GM12878 (cell line): ENCODE measurements at regions of chr14 and their contacts with region 1.

Region 1: DNA sequence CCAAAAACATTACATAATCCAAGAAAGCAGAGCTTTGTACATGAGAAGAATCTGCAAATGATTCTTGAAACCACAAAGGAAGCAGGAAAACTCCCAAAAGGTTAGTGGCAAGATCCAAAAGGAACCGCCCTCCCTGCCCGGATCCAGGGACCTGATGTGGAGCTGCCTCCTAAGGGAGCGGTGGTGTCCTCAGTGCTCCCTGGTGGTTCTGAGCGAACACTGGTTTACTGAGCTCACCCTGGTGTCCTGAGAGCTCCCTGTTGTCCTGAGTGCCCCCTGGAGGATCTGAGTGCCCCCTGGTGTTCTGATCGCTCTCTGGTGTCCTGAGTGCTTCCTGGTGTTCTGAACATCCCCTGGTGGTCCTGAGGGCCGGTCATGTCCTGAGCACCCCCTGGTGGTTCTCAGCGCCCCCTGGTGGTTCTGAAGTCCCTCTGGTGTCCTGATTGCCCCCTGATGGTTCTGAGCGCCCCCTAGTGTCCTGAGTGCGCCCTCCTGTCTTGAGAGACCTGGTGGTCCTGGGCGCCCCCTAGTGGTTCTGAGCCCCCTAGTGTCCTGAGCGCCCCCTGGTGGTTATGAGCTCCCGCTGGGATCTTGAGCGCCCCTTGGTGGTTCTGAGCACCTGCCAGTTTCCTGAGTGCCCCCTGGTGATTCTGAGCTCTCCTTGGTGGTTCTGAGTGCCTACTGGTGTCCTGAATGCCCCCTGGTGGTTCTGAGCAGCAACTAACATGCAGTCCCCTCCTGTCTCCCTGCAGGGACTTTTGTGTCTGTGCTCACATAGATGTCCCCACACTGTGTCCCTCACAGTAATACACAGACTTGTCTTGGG is 891.1 kb downstream of the TMEM121 start:
- DNase-seq: peak; percentile 72
- ATAC-seq: peak; percentile 99
- H3K4me3 ChIP-seq: no peak overlapping the region
- H3K27ac ChIP-seq: no peak overlapping the region
- H3K4me1 ChIP-seq: no peaks in the 10 kb centered on the region
- H3K27me3 ChIP-seq: no peaks in the 10 kb centered on the region; a peak in 1 of 4 replicates
- CTCF ChIP-seq: peak; percentile 99 to 100 (median 100)
- EP300 ChIP-seq: no peak
- POLR2A ChIP-seq: no peak
- RAD21 ChIP-seq: peak; percentile 49; the same call in 1 of the 2 replicates

Region 2: DNA sequence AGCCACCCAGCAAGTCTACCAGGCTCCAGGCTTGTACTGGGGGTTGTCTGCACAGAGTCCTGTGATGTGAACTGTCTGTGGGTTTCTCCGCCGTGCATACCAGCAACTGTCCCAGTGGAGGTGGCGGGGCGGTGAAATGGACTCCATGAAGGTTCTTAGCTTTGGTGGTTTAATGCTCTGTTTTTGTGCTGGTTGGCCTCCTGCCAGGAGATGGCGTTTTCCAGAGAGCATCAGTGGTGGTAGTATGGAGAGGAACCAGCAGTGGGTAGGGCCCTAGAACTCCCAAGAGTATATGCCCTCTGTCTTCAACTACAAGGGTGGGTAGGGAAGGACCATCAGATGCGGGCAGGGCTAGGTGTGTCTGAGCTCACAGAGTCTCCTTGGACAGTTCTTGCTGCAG is 587.3 kb before region 1 on chr14:
- CTCF ChIA-PET with region 1: interaction called, 11 read pairs
- POLR2A ChIA-PET with region 1: no interaction called
- RAD21 ChIA-PET with region 1: no interaction called
- SMC1A ChIA-PET with region 1: no interaction called
- in situ Hi-C with region 1: no loop called
- intact Hi-C with region 1: no loop called
- DNase-seq: no peak
- ATAC-seq: no peak
- H3K4me3 ChIP-seq: no peak overlapping the region
- H3K27ac ChIP-seq: no peak overlapping the region
- H3K4me1 ChIP-seq: no peaks in the 10 kb centered on the region
- H3K27me3 ChIP-seq: no peaks in the 10 kb centered on the region
- CTCF ChIP-seq: no peak
- EP300 ChIP-seq: no peak
- POLR2A ChIP-seq: no peak
- RAD21 ChIP-seq: no peak

Region 3: GRCh38 chr14:106318700-106319099 is 98.7 kb before region 1 on chr14:
- CTCF ChIA-PET with region 1: interaction called, 63 read pairs
- POLR2A ChIA-PET with region 1: no interaction called
- RAD21 ChIA-PET with region 1: no interaction called
- SMC1A ChIA-PET with region 1: interaction called, 3 read pairs
- in situ Hi-C with region 1: no loop called
- intact Hi-C with region 1: loop called (anchors 5 kb)
- DNase-seq: no peak
- ATAC-seq: peak; percentile 79
- H3K4me3 ChIP-seq: no peak overlapping the region
- H3K27ac ChIP-seq: no peak overlapping the region
- H3K4me1 ChIP-seq: no peaks in the 10 kb centered on the region; the same call in 1 of the 2 replicates
- H3K27me3 ChIP-seq: no peaks in the 10 kb centered on the region
- CTCF ChIP-seq: peak; percentile 59 to 89 (median 87)
- EP300 ChIP-seq: no peak
- POLR2A ChIP-seq: no peak
- RAD21 ChIP-seq: 0 out of 2 replicates have a peak, but pooled peaks have one; percentile 13

Region 4: GRCh38 chr14:106436310-106436905 is 19.0 kb after region 1 on chr14:
- CTCF ChIA-PET with region 1: interaction called, 104 read pairs
- POLR2A ChIA-PET with region 1: no interaction called
- RAD21 ChIA-PET with region 1: interaction called, 7 read pairs
- SMC1A ChIA-PET with region 1: interaction called, 6 read pairs
- in situ Hi-C with region 1: no loop called
- intact Hi-C with region 1: no loop called
- DNase-seq: no peak
- ATAC-seq: peak; percentile 68
- H3K4me3 ChIP-seq: no peak overlapping the region
- H3K27ac ChIP-seq: no peak overlapping the region
- H3K4me1 ChIP-seq: no peaks in the 10 kb centered on the region
- H3K27me3 ChIP-seq: peaks cover 0 to 6% of the 10 kb centered on the region in 2 experiments; a peak in 2 of 4 replicates
- CTCF ChIP-seq: peak; percentile 58 to 83 (median 70)
- EP300 ChIP-seq: no peak
- POLR2A ChIP-seq: no peak
- RAD21 ChIP-seq: peak; percentile 64

Region 5: DNA sequence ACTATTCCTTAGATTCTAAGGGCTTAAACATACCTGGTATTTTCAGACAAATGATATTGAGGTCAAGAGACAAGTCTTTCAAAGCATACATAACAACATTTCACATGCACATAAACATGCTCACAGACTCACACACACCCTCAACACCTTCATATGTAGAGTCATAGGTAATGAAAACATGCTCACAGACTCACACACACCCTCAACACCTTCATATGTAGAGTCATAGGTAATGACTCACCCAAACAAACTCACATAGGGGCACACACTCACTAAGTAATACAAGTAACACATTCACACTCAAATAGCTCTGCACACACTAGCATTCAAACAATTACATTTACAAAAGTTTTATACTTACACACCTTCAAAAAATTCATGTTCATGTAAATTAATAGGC is 84.5 kb after region 1 on chr14:
- CTCF ChIA-PET with region 1: interaction called, 22 read pairs
- POLR2A ChIA-PET with region 1: no interaction called
- RAD21 ChIA-PET with region 1: no interaction called
- SMC1A ChIA-PET with region 1: no interaction called
- in situ Hi-C with region 1: no loop called
- intact Hi-C with region 1: no loop called
- DNase-seq: no peak
- ATAC-seq: no peak
- H3K4me3 ChIP-seq: no peak overlapping the region
- H3K27ac ChIP-seq: no peak overlapping the region
- H3K4me1 ChIP-seq: no peaks in the 10 kb centered on the region
- H3K27me3 ChIP-seq: peaks cover under 1 to 5% of the 10 kb centered on the region in 2 experiments; a peak in 3 of 4 replicates
- CTCF ChIP-seq: no peak
- EP300 ChIP-seq: no peak
- POLR2A ChIP-seq: no peak
- RAD21 ChIP-seq: no peak

Region 6: DNA sequence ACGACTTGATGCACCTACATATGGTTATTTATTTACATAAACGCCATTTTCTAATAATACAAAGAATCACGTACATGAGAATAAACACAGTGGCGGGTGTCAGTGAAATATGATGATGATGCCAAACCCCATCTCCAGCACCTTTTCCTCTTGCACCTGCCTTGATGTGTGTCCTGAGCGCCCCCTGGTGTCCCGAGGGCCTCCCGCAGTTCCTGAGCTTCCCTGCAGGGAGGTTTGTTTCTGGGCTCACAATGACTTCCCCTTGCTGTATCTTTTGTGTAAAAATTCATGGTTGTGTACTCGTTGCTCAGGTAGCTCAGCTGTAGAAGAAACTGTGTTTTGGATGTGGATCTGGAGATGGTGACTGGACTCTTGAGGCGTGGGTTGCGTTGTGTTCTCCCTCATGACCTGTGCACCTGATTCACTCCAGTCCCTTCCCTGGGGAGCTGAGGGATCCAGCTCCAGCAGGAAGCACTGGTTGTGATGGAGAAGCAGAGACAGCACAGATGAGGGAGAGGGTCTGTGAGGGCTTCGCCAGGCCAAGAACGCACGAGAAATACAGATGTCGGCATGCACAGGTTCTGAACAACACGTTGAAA is 146.7 kb after region 1 on chr14:
- CTCF ChIA-PET with region 1: interaction called, 32 read pairs
- POLR2A ChIA-PET with region 1: no interaction called
- RAD21 ChIA-PET with region 1: no interaction called
- SMC1A ChIA-PET with region 1: no interaction called
- in situ Hi-C with region 1: no loop called
- intact Hi-C with region 1: no loop called
- DNase-seq: no peak
- ATAC-seq: peak; percentile 96
- H3K4me3 ChIP-seq: no peak overlapping the region
- H3K27ac ChIP-seq: no peak overlapping the region
- H3K4me1 ChIP-seq: no peaks in the 10 kb centered on the region
- H3K27me3 ChIP-seq: peaks cover 0 to 2% of the 10 kb centered on the region in 2 experiments; a peak in 2 of 4 replicates
- CTCF ChIP-seq: peak; percentile 85 to 96 (median 96)
- EP300 ChIP-seq: no peak
- POLR2A ChIP-seq: no peak
- RAD21 ChIP-seq: peak; percentile 69